ENCODE measurements at regions of chr5 and their contacts with region 1.

Region 1: DNA sequence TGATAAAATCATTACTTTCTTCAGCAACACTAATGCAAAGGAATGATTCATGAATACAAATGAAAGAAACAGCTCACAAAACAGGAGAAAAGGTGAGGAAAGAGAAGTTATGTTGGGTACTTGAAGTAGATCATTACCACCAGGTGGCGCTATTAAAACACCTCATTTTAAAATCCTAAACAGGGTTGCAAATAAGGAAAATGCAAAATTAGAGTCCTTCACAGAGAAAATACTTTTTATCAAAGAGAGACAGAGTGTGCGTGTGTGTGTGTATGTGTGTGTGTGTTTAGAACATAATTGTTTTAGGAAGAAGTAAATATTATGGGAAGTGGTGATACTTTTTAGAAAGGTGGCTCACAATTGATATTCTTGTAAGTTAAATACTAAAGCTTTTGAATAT is 49.5 kb upstream of the CD180 start:
- DNase-seq: peak; percentile 78
- ATAC-seq: peak; percentile 31
- H3K4me3 ChIP-seq: no peak overlapping the region
- H3K4me3 Mint-ChIP-seq: no peak overlapping the region
- H3K27ac ChIP-seq: no peak overlapping the region
- H3K27ac Mint-ChIP-seq: no peak overlapping the region
- H3K4me1 ChIP-seq: peaks cover 5 to 8% of the 10 kb centered on the region in 2 donors
- H3K4me1 Mint-ChIP-seq: peaks cover 5% of the 10 kb centered on the region
- H3K27me3 ChIP-seq: no peaks in the 10 kb centered on the region
- H3K27me3 Mint-ChIP-seq: no peaks in the 10 kb centered on the region
- CTCF ChIP-seq: peak; percentile 93

Region 2: DNA sequence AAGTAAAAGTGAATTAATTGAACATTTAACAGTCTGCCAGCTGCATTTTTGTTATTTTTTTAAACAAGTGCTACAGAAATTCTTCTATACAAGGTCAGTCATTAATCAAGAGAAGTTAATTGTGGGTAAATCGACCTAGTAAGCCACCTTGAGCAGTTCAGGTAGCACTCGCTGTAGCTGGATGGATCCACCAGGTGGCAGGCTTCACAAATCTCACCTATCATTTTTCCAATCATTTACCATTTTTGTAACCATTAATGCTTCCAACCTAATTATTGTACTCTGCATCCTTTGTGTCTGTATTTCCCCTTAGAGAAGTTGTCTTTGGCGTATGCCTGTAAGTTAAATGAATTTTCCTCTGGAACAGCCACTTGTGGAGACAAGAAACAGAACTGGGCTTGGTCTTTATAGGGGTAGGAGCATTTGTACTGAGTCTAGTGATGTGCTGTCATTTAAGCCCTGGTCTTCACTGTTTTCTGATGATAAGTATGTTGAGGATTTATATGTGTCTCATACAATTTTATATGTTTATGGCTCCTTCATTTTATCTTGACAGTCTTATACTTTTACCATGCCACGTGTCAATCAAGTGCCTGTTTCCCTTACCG is 89.0 kb before region 1 on chr5:
- CTCF ChIA-PET with region 1: interaction called, 11 read pairs
- POLR2A ChIA-PET with region 1: no interaction called
- intact Hi-C with region 1: no loop called
- DNase-seq: peak; percentile 69
- ATAC-seq: peak; percentile 69
- H3K4me3 ChIP-seq: no peak overlapping the region
- H3K4me3 Mint-ChIP-seq: no peak overlapping the region
- H3K27ac ChIP-seq: no peak overlapping the region
- H3K27ac Mint-ChIP-seq: peak overlapping the region; percentile 46
- H3K4me1 ChIP-seq: peaks cover 3 to 6% of the 10 kb centered on the region in 2 donors
- H3K4me1 Mint-ChIP-seq: peaks cover 17% of the 10 kb centered on the region
- H3K27me3 ChIP-seq: no peaks in the 10 kb centered on the region
- H3K27me3 Mint-ChIP-seq: no peaks in the 10 kb centered on the region
- CTCF ChIP-seq: peak; percentile 95

Region 3: GRCh38 chr5:67215583-67216471 is 30.3 kb before region 1 on chr5:
- CTCF ChIA-PET with region 1: interaction called, 36 read pairs
- POLR2A ChIA-PET with region 1: no interaction called
- intact Hi-C with region 1: no loop called
- DNase-seq: peak; percentile 95
- ATAC-seq: peak; percentile 97
- H3K4me3 ChIP-seq: peak overlapping the region in 3 of 5 experiments; percentile 17 to 28 (median 20)
- H3K4me3 Mint-ChIP-seq: peak overlapping the region; percentile 85
- H3K27ac ChIP-seq: peak overlapping the region; percentile 92 to 98
- H3K27ac Mint-ChIP-seq: peak overlapping the region; percentile 100
- H3K4me1 ChIP-seq: peaks cover 34 to 39% of the 10 kb centered on the region in 2 donors
- H3K4me1 Mint-ChIP-seq: peaks cover 56% of the 10 kb centered on the region
- H3K27me3 ChIP-seq: no peaks in the 10 kb centered on the region
- H3K27me3 Mint-ChIP-seq: no peaks in the 10 kb centered on the region
- CTCF ChIP-seq: no peak

Region 4: DNA sequence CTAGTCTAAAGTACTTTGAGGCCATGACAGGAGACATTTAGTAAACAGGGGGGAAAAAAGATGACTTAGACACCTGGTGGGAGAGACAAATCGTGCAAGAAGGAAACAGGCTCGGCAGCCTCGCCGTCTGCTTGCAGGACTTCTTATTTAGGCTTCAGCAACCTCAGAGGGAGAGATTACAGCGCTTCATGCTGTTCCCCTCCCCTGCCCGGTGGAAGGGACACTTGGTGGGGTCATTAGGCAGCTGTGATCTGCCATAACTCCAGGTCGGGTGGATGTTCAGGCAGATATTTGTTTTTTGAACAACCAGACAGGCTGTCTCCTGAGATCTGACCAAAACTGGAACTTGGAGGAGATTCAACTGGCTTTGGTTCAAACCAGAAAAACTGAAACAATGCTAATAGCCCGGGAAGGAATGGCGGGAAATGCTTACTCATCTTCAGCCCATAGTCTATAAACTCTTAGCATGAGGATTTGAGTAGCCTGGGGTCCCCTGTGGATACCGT is 11.4 kb before region 1 on chr5:
- CTCF ChIA-PET with region 1: interaction called, 15 read pairs
- POLR2A ChIA-PET with region 1: interaction called, 6 read pairs
- intact Hi-C with region 1: no loop called
- DNase-seq: peak; percentile 35
- ATAC-seq: peak; percentile 31
- H3K4me3 ChIP-seq: no peak overlapping the region
- H3K4me3 Mint-ChIP-seq: peak overlapping the region; percentile 65
- H3K27ac ChIP-seq: no peak overlapping the region
- H3K27ac Mint-ChIP-seq: peak overlapping the region; percentile 8
- H3K4me1 ChIP-seq: peaks cover 5 to 7% of the 10 kb centered on the region in 2 donors
- H3K4me1 Mint-ChIP-seq: peaks cover 14% of the 10 kb centered on the region
- H3K27me3 ChIP-seq: no peaks in the 10 kb centered on the region
- H3K27me3 Mint-ChIP-seq: no peaks in the 10 kb centered on the region
- CTCF ChIP-seq: no peak

Region 5: GRCh38 chr5:68246802-68247201 is 1000.7 kb after region 1 on chr5:
- CTCF ChIA-PET with region 1: interaction called, 116 read pairs
- POLR2A ChIA-PET with region 1: no interaction called
- intact Hi-C with region 1: loop called (anchors 1 kb)
- DNase-seq: peak; percentile 30
- ATAC-seq: no peak
- H3K4me3 ChIP-seq: no peak overlapping the region
- H3K4me3 Mint-ChIP-seq: no peak overlapping the region
- H3K27ac ChIP-seq: no peak overlapping the region
- H3K27ac Mint-ChIP-seq: no peak overlapping the region
- H3K4me1 ChIP-seq: peaks cover 35 to 37% of the 10 kb centered on the region in 2 donors
- H3K4me1 Mint-ChIP-seq: peaks cover 70% of the 10 kb centered on the region
- H3K27me3 ChIP-seq: no peaks in the 10 kb centered on the region
- H3K27me3 Mint-ChIP-seq: no peaks in the 10 kb centered on the region
- CTCF ChIP-seq: peak; percentile 57

Region 6: DNA sequence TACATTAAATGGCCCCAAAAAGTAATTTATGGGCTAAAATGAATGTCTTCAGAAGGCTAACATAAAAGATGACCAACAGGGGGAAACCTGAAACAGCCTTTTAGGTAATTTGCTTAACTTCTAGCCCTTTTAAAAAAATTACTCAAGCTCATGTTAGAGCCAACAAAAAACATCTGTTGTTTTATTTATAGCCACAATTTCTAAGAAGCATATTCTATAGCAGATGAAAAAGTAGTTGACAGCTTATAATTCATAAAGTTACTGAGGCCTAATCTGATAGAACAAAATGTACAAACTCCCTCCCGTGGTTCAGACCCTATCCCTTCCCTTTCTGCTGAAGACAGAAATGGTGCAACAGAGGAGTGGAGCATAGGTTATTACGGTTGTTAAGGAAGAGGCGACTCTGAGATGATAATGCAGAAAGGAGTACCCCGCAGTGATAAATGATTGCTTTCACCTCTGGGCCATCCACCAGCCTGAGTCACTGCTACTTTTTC is 1015.5 kb after region 1 on chr5:
- CTCF ChIA-PET with region 1: interaction called, 82 read pairs
- POLR2A ChIA-PET with region 1: no interaction called
- intact Hi-C with region 1: no loop called
- DNase-seq: no peak
- ATAC-seq: no peak
- H3K4me3 ChIP-seq: no peak overlapping the region
- H3K4me3 Mint-ChIP-seq: no peak overlapping the region
- H3K27ac ChIP-seq: peak overlapping the region in 1 of 2 donors; percentile 28
- H3K27ac Mint-ChIP-seq: peak overlapping the region; percentile 27
- H3K4me1 ChIP-seq: peaks cover 11 to 16% of the 10 kb centered on the region in 2 donors
- H3K4me1 Mint-ChIP-seq: peaks cover 73% of the 10 kb centered on the region
- H3K27me3 ChIP-seq: no peaks in the 10 kb centered on the region
- H3K27me3 Mint-ChIP-seq: no peaks in the 10 kb centered on the region
- CTCF ChIP-seq: no peak

Region 7: GRCh38 chr5:68287976-68288706 is 1042.0 kb after region 1 on chr5:
- CTCF ChIA-PET with region 1: interaction called, 24 read pairs
- POLR2A ChIA-PET with region 1: no interaction called
- intact Hi-C with region 1: no loop called
- DNase-seq: peak; percentile 59
- ATAC-seq: peak; percentile 63
- H3K4me3 ChIP-seq: peak overlapping the region; percentile 47 to 75 (median 65)
- H3K4me3 Mint-ChIP-seq: peak overlapping the region; percentile 97
- H3K27ac ChIP-seq: peak overlapping the region; percentile 26 to 64
- H3K27ac Mint-ChIP-seq: peak overlapping the region; percentile 91
- H3K4me1 ChIP-seq: peaks cover 31 to 34% of the 10 kb centered on the region in 2 donors
- H3K4me1 Mint-ChIP-seq: peaks cover 40% of the 10 kb centered on the region
- H3K27me3 ChIP-seq: no peaks in the 10 kb centered on the region
- H3K27me3 Mint-ChIP-seq: no peaks in the 10 kb centered on the region
- CTCF ChIP-seq: no peak

Measured in B cell (primary cell).